SK-N-SH (cell line): ENCODE measurements at regions of chr10 and their contacts with region 1.

Region 1: GRCh38 chr10:60444494-60445064 is 54.9 kb upstream of the ANK3 start:
- DNase-seq: no peak
- H3K4me3 ChIP-seq: no peak overlapping the region; a peak in 1 of 4 replicates
- H3K27ac ChIP-seq: peak overlapping the region in 1 of 2 experiments; percentile 48; a peak in 1 of 4 replicates
- H3K4me1 ChIP-seq: peaks cover 0 to 33% of the 10 kb centered on the region in 2 experiments
- H3K27me3 ChIP-seq: no peaks in the 10 kb centered on the region
- CTCF ChIP-seq: peak; percentile 79
- EP300 ChIP-seq: no peak
- RAD21 ChIP-seq: peak; percentile 81

Region 2: GRCh38 chr10:60099998-60100747 is 344.4 kb before region 1 on chr10:
- CTCF ChIA-PET with region 1: interaction called, 19 read pairs
- POLR2A ChIA-PET with region 1: no interaction called
- DNase-seq: peak; percentile 37
- H3K4me3 ChIP-seq: no peak overlapping the region; a peak in 1 of 4 replicates
- H3K27ac ChIP-seq: no peak overlapping the region
- H3K4me1 ChIP-seq: no peaks in the 10 kb centered on the region; a peak in 2 of 4 replicates
- H3K27me3 ChIP-seq: no peaks in the 10 kb centered on the region
- CTCF ChIP-seq: peak; percentile 71
- EP300 ChIP-seq: no peak
- RAD21 ChIP-seq: peak; percentile 85

Region 3: DNA sequence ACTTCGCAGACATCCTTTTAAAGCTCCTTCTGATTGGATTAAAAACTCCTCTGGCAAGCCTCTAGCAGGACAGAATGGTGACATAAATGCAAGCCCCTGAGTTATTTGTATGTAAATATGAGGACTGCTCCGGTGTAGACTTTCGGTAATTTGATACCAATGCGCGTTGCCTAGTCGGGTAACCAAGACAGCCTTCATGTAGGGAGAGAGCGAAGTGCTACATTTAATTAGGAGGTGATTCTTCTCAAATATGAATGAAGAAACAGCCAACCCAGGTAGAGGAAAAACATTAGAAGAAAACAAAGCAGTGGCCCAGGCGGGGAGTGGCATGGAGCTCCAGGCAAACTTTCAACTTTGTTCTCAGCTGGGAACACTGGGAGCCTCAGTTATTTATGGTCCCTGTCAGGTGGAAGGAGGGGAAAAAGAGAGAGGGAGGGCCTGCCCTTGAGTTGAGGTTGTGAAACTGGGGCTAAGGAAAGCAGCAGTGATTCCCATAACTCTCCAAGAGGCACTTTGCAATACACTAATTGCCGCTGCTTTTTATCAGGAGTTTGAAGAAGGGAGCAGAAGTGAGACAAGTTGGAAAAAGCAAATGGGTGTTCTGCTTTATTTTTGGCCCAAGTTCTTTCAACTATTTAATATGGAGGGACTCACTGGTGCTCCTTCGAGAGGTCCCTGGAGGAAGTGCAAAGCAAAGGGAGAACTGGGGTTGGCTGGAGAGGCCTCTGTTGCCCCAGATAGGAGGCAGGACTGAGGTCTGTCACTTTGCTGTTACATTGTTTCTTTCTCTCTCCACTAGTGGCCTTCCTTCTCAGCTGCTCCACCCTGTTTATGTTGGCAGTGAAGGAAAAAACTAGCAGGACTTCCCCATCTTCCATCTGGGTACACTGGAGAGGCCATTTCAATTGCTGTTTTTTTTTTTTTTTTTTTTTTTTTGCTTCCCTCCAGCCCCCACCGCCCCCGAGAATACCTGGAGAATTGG is 303.6 kb before region 1 on chr10:
- CTCF ChIA-PET with region 1: no interaction called
- POLR2A ChIA-PET with region 1: no interaction called
- DNase-seq: no peak
- H3K4me3 ChIP-seq: no peak overlapping the region
- H3K27ac ChIP-seq: no peak overlapping the region
- H3K4me1 ChIP-seq: peaks cover 0 to 4% of the 10 kb centered on the region in 2 experiments; a peak in 2 of 4 replicates
- H3K27me3 ChIP-seq: no peaks in the 10 kb centered on the region
- CTCF ChIP-seq: no peak
- EP300 ChIP-seq: no peak
- RAD21 ChIP-seq: no peak

Region 4: GRCh38 chr10:60463746-60464145 is 19.2 kb after region 1 on chr10:
- CTCF ChIA-PET with region 1: interaction called, 10 read pairs
- POLR2A ChIA-PET with region 1: no interaction called
- DNase-seq: no peak
- H3K4me3 ChIP-seq: no peak overlapping the region
- H3K27ac ChIP-seq: peak overlapping the region in 1 of 2 experiments; percentile 60; a peak in 1 of 4 replicates
- H3K4me1 ChIP-seq: peaks cover 0 to 5% of the 10 kb centered on the region in 2 experiments; a peak in 1 of 4 replicates
- H3K27me3 ChIP-seq: no peaks in the 10 kb centered on the region
- CTCF ChIP-seq: no peak
- EP300 ChIP-seq: no peak
- RAD21 ChIP-seq: no peak

Region 5: GRCh38 chr10:60629332-60629731 is 184.8 kb after region 1 on chr10:
- CTCF ChIA-PET with region 1: interaction called, 14 read pairs
- POLR2A ChIA-PET with region 1: no interaction called
- DNase-seq: no peak
- H3K4me3 ChIP-seq: no peak overlapping the region
- H3K27ac ChIP-seq: no peak overlapping the region
- H3K4me1 ChIP-seq: no peaks in the 10 kb centered on the region; a peak in 1 of 4 replicates
- H3K27me3 ChIP-seq: no peaks in the 10 kb centered on the region
- CTCF ChIP-seq: no peak
- EP300 ChIP-seq: no peak
- RAD21 ChIP-seq: no peak

Region 6: DNA sequence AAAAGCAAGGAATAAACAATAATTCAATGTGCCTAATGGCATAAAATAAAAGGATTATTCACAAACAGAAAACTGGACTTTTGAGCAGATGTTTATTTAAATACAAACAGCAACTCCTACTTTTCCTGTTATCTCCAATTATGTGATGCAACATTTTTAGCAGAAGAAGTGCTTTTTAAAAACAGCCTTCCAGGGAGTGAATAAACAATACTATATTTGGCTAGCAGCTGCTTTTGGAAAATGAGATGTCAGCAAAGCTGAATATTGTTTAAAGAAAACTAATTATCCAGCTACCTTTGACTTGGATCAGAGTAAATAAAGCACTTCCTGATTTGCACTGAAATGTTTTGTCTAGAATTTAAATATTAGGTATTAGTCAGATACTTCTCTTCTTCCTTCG is 356.9 kb after region 1 on chr10:
- CTCF ChIA-PET with region 1: no interaction called
- POLR2A ChIA-PET with region 1: no interaction called
- DNase-seq: no peak
- H3K4me3 ChIP-seq: no peak overlapping the region
- H3K27ac ChIP-seq: no peak overlapping the region
- H3K4me1 ChIP-seq: no peaks in the 10 kb centered on the region; a peak in 1 of 4 replicates
- H3K27me3 ChIP-seq: no peaks in the 10 kb centered on the region
- CTCF ChIP-seq: no peak
- EP300 ChIP-seq: no peak
- RAD21 ChIP-seq: no peak